CD8-positive, alpha-beta memory T cell (primary cell): ENCODE measurements at regions of chr6 and their contacts with region 1.

Region 1: DNA sequence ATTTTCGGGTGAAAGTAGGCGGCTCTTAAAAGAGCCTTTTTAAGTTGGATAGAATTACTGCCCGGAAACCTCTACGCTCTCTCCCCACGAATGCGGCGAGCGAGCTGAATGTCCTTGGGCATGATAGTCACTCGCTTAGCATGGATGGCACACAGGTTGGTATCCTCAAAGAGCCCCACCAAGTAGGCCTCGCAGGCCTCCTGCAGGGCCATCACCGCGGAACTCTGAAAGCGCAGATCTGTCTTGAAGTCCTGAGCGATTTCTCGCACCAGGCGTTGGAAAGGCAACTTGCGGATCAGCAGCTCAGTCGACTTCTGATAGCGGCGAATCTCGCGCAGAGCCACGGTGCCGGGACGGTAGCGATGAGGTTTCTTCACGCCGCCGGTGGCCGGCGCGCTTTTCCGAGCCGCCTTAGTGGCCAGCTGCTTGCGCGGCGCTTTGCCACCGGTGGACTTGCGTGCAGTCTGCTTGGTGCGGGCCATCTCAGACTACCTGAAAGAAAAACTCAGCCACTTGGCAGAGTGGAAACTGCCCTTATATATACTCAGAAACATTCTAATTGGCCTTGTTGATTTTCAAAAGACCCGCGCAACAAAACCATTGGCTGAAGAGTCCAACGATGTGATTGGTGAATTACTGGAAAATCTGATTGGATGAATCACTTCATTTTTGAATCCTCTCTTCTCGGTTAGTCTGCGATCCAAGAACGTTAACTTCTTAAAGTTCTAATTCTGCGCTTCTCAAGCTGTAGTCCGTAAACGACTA is 93.9 kb upstream of the BTN3A2 start:
- DNase-seq: peak; percentile 61 to 84 (median 82)
- H3K4me3 ChIP-seq: peak overlapping the region; percentile 70
- H3K4me3 Mint-ChIP-seq: no peak overlapping the region
- H3K27ac ChIP-seq: peak overlapping the region; percentile 40
- H3K27ac Mint-ChIP-seq: peak overlapping the region in 5 of 8 donors; percentile 16 to 98 (median 41)
- H3K4me1 ChIP-seq: peaks cover 23% of the 10 kb centered on the region
- H3K4me1 Mint-ChIP-seq: peaks cover 19 to 29% (median 22%) of the 10 kb centered on the region in 3 donors
- H3K27me3 ChIP-seq: no peaks in the 10 kb centered on the region
- H3K27me3 Mint-ChIP-seq: peaks cover 0 to 10% of the 10 kb centered on the region in 2 donors

Region 2: DNA sequence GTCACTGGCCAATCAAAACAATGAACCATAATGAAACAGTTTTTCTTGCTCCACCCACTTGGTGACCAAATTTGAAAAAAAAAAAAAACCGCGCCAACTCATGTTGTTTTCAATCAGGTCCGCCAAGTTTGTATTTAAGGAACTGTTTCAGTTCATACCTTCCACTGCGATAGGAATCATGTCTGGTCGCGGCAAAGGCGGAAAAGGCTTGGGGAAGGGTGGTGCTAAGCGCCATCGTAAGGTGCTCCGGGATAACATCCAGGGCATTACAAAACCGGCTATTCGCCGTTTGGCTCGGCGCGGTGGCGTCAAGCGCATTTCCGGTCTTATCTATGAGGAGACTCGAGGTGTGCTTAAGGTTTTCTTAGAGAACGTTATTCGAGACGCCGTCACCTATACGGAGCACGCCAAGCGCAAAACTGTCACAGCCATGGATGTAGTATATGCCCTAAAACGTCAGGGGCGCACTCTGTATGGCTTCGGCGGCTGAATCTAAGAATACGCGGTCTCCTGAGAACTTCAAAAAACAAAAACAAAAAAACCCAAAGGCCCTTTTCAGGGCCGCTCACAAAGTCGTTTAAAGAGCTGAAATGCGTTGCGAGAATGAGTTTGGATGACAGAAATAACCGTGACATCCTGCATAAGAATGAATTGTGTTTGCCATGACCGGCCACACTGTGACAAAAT is 167.2 kb before region 1 on chr6:
- CTCF ChIA-PET with region 1: no interaction called
- POLR2A ChIA-PET with region 1: interaction called, 14 read pairs
- DNase-seq: peak; percentile 75 to 96 (median 93)
- H3K4me3 ChIP-seq: peak overlapping the region; percentile 51
- H3K4me3 Mint-ChIP-seq: peak overlapping the region; percentile 83 to 92 (median 87)
- H3K27ac ChIP-seq: peak overlapping the region; percentile 82
- H3K27ac Mint-ChIP-seq: peak overlapping the region; percentile 96 to 98 (median 97)
- H3K4me1 ChIP-seq: peaks cover 18% of the 10 kb centered on the region
- H3K4me1 Mint-ChIP-seq: peaks cover 16 to 20% (median 17%) of the 10 kb centered on the region in 3 donors
- H3K27me3 ChIP-seq: no peaks in the 10 kb centered on the region
- H3K27me3 Mint-ChIP-seq: peaks cover 0 to 4% of the 10 kb centered on the region in 2 donors

Region 3: GRCh38 chr6:26204332-26205165 is 66.5 kb before region 1 on chr6:
- CTCF ChIA-PET with region 1: interaction called, 46 read pairs
- POLR2A ChIA-PET with region 1: interaction called, 173 read pairs
- DNase-seq: peak; percentile 75 to 95 (median 87)
- H3K4me3 ChIP-seq: peak overlapping the region; percentile 73
- H3K4me3 Mint-ChIP-seq: no peak overlapping the region
- H3K27ac ChIP-seq: peak overlapping the region; percentile 99
- H3K27ac Mint-ChIP-seq: no peak overlapping the region
- H3K4me1 ChIP-seq: peaks cover 31% of the 10 kb centered on the region
- H3K4me1 Mint-ChIP-seq: peaks cover 18 to 31% (median 20%) of the 10 kb centered on the region in 3 donors
- H3K27me3 ChIP-seq: no peaks in the 10 kb centered on the region
- H3K27me3 Mint-ChIP-seq: peaks cover 0 to 8% of the 10 kb centered on the region in 2 donors

Region 4: DNA sequence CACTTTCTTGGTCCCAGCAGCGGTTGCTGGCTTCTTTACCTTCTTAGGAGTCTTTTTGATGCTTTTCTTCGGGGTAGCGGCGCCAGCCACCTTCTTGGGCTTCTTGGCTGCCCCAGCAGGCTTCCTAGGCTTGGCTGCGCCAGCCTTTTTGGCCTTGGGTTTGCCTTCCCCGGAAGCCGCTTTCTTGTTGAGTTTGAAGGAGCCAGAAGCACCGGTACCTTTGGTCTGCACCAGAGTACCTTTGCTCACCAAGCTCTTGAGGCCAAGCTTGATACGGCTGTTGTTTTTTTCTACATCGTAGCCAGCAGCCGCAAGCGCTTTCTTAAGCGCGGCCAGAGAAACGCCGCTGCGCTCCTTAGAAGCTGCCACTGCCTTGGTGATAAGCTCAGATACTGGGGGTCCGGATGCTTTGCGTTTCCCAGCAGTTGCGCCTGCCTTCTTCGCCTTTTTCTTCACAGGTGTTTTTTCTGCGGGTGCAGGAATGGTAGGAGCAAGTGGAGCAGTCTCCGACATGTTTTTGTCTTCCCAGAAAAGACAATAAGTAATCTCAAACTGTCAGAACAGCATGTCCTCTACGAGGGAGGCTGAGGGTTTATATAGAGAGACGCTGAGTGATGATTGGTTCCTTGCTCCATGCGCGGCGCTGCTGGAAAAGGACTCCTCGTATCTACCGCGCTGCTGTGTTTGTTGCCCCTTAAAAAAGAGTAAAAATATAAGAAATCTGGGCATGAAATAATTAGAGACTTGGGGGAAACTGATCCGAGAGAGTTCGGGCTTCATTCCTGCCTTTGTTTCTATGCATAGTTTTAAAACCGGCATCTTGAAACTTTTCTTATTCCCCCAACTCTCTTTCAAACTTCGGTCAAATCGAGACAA is 36.4 kb before region 1 on chr6:
- CTCF ChIA-PET with region 1: interaction called, 22 read pairs
- POLR2A ChIA-PET with region 1: interaction called, 99 read pairs
- DNase-seq: peak; percentile 38 to 84 (median 76)
- H3K4me3 ChIP-seq: peak overlapping the region; percentile 94
- H3K4me3 Mint-ChIP-seq: peak overlapping the region; percentile 87 to 95 (median 91)
- H3K27ac ChIP-seq: peak overlapping the region; percentile 88
- H3K27ac Mint-ChIP-seq: peak overlapping the region; percentile 87 to 98 (median 96)
- H3K4me1 ChIP-seq: peaks cover 19% of the 10 kb centered on the region
- H3K4me1 Mint-ChIP-seq: peaks cover 28 to 35% (median 35%) of the 10 kb centered on the region in 3 donors
- H3K27me3 ChIP-seq: no peaks in the 10 kb centered on the region
- H3K27me3 Mint-ChIP-seq: peaks cover 0 to 5% of the 10 kb centered on the region in 2 donors

Region 5: GRCh38 chr6:26312501-26313390 is 41.7 kb after region 1 on chr6:
- CTCF ChIA-PET with region 1: interaction called, 5 read pairs
- POLR2A ChIA-PET with region 1: interaction called, 21 read pairs
- DNase-seq: peak; percentile 69 to 91 (median 81)
- H3K4me3 ChIP-seq: peak overlapping the region; percentile 89
- H3K4me3 Mint-ChIP-seq: peak overlapping the region; percentile 85 to 97 (median 94)
- H3K27ac ChIP-seq: peak overlapping the region; percentile 74
- H3K27ac Mint-ChIP-seq: peak overlapping the region; percentile 77 to 100 (median 92)
- H3K4me1 ChIP-seq: peaks cover 4% of the 10 kb centered on the region
- H3K4me1 Mint-ChIP-seq: peaks cover 39 to 60% (median 53%) of the 10 kb centered on the region in 3 donors
- H3K27me3 ChIP-seq: no peaks in the 10 kb centered on the region
- H3K27me3 Mint-ChIP-seq: peaks cover 2 to 24% of the 10 kb centered on the region in 2 donors

Region 6: DNA sequence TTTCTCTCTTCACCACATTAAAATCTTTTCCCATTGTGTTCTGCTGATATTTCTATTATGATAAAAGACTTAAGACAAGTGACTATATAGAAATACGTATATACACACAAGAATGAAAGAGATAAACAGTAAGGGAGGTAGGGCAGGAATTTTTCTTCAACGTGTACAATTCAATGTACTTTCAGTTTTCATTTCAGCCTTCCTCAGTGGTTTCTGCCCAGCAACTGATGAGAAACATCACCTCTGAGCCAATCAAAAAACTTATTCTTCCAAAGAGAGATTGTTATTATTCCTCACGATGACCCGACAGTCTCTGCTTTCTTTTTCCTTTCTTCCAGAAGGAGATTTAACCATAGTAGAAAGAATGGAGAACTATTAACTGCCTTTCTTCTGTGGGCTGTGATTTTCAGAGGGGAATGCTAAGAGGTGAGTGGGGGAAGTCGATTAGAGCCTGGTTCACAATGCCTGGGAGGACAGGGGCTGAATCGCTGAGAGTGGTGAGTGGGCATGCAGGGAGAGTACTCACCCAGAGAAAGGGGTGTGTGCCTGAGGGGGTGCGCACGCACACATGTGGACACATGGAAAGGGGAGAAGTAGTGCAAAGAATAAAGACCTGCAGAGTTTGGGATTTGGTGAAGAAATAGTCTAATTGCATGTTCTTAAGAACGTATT is 131.0 kb after region 1 on chr6 and contains the start of gene BTN3A1:
- CTCF ChIA-PET with region 1: no interaction called
- POLR2A ChIA-PET with region 1: no interaction called
- DNase-seq: peak; percentile 60 to 82 (median 77)
- H3K4me3 ChIP-seq: peak within 1 kb of the TSS; percentile 95
- H3K4me3 Mint-ChIP-seq: peak within 1 kb of the TSS; percentile 94 to 100 (median 97)
- H3K27ac ChIP-seq: peak within 1 kb of the TSS; percentile 94
- H3K27ac Mint-ChIP-seq: peak within 1 kb of the TSS; percentile 97 to 100 (median 100)
- H3K4me1 ChIP-seq: peaks cover 46% of the 10 kb centered on the region
- H3K4me1 Mint-ChIP-seq: peaks cover 50 to 57% (median 51%) of the 10 kb centered on the region in 3 donors
- H3K27me3 ChIP-seq: no peaks in the 10 kb centered on the region
- H3K27me3 Mint-ChIP-seq: no peaks in the 10 kb centered on the region
- total RNA-seq, gene BTN3A1: 30.8 to 31.5 TPM